GM10248 (cell line): ENCODE measurements at regions of chr10 and their contacts with region 1.

Region 1: GRCh38 chr10:96229568-96230030 is 41.8 kb downstream of the BLNK start:
- DNase-seq: peak; percentile 75
- CTCF ChIP-seq: peak; percentile 95

Region 2: DNA sequence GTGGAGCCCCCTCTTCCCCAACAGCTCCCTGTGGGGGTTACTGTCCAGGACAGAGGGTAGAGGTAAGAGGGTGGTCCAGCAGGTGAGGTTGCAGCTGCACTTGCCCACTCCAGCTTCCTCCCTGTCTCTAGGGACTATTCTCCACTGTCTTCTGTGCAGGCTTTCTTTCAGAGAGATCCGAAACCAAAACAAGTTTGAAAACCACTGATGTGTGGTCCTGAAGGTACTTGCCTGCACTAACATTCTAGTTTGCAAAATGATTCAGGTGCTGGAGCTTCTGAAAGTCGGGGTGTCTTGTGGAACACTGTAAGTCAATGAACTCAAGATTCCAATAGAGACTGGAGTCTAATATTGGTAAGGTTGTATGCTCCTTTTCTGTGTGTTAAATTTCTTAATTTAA is 21.3 kb before region 1 on chr10:
- CTCF ChIA-PET with region 1: interaction called, 54 read pairs
- POLR2A ChIA-PET with region 1: no interaction called
- DNase-seq: peak; percentile 45
- CTCF ChIP-seq: no peak

Region 3: DNA sequence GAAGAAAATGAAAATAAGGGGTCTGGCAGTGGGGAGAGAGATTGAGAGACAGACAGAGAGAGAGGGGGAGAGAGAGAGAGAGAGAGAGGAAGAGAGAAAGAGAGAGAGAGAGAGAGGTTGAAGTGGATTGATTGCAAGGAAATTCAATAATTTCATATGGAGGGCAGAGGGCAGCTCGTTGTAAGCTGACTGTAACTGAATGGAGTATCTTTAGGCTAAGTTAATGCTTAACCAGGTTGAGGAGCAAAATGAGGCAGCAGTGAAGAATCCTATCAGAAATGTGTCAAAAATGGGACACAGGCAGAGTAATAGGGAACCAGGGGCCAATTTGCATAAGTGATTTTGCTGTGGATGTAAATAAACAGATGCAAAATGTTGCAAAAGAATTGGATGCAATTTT is 20.8 kb after region 1 on chr10:
- CTCF ChIA-PET with region 1: interaction called, 42 read pairs
- POLR2A ChIA-PET with region 1: no interaction called
- DNase-seq: no peak
- CTCF ChIP-seq: no peak

Region 4: GRCh38 chr10:96271016-96271829 is 41.6 kb after region 1 on chr10 and contains the start of gene BLNK:
- CTCF ChIA-PET with region 1: interaction called, 40 read pairs
- POLR2A ChIA-PET with region 1: no interaction called
- DNase-seq: peak; percentile 76
- CTCF ChIP-seq: no peak

Region 5: GRCh38 chr10:96319754-96320474 is 90.3 kb after region 1 on chr10:
- CTCF ChIA-PET with region 1: interaction called, 19 read pairs
- POLR2A ChIA-PET with region 1: no interaction called
- DNase-seq: no peak
- CTCF ChIP-seq: no peak